ENCODE measurements at regions of chr22 and their contacts with region 1.

Region 1: DNA sequence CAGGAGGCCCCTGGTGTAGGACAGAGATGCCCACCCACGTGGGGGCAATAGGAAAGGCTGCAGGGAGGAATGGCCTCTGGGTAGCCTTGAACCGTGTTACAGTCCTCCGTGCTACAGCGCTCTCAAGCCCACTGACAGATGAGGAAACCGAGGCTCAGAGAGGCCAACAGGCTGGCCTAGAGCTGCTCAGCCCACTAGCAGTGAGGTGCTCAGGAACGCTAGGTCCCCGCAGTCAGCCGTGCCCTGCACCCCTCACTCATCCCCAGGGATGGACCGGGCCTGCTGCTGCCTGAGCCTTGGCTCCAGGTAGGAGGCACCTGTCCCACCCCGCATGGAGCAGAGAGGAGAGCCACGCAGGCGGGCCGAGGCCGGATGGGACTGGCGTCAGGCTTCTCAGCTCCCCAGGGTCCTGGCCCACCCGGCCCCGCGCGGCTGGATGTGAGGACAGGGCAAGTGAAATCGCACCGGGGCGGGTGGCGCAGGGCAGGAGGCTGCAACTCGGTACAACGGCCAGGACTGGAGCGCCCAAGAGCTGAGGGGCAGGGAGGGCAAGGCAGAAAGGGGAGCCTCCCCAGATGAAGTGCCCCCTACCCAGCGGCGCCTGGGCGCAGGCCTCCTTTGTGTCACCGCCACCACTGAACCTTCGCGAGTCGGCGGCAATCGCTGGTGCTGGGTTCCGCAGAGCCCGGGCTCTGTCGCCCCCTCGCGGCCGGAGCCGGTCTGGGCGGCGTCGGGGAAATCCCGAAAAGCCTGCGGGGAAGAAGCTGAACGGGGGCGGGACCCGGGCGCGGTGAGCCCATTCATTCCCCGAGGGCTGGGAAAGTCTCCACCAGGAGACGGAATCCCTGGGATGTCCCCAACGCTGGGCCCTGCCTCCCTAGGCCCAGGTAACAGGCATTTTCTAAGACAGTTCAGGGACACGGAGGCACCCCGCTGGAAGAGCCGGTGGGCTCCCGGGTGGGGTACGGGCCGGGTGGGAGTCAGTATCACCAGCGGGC is 8.4 kb upstream of the SLC2A11 start:
- DNase-seq: peak; percentile 74
- H3K4me3 ChIP-seq: no peak overlapping the region
- H3K27ac ChIP-seq: no peak overlapping the region
- H3K4me1 ChIP-seq: peaks cover 4% of the 10 kb centered on the region
- H3K27me3 ChIP-seq: no peaks in the 10 kb centered on the region
- CTCF ChIP-seq: peak; percentile 98 to 99
- POLR2A ChIP-seq: no peak

Region 2: DNA sequence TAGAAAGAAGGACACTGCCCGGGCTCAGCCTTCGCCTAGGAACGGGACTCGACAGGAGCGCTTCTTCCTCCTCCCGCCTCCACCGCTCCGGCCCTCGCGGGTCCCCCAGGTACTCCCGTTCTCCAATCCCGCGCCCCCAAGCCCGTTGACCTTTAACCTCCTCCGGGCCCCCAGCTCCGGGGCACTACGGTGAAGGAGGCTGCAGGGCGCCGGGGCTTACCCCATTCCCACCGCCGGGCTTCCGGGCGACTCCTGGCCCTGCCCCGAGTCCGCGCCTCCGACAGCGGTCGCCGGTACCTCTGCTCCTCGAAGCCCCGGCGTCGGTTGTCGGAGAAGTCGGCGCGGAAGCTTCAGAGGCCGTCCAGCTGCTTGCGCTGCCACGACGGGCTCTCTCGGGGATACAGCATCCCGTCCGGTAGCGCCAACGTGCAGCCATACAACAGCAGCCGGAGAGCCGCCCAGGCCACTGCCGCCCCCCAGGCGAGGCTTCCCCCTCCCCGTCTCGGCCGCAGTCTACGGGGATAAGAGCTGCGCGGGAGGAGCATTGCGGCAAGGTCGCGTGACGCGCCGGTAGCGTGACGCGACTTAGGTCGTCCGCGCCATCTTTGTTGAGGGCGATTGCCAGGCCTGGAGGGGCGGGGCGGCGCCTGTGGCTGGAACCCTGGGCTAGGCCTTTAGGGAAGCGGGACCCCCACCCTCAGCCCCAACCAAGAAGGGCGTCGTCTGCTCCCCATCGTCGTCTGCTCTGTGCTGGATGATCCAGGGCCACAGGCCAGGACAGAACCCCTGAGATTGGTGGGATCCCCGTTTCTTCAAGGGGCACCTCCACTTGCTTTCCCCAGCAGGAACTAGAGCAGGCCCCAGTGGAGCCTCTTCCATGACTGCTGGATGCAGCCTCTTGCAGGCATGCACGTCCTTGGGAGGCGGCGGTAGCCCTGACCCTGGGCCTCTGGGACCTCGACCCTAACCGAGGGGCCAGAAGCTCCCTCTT is 132.2 kb before region 1 on chr22:
- CTCF ChIA-PET with region 1: interaction called, 5 read pairs
- POLR2A ChIA-PET with region 1: no interaction called
- dilution Hi-C with region 1: no loop called
- intact Hi-C with region 1: loop called (anchors 5 kb)
- DNase-seq: peak; percentile 83
- H3K4me3 ChIP-seq: peak overlapping the region; percentile 68 to 88 (median 74)
- H3K27ac ChIP-seq: peak overlapping the region; percentile 55
- H3K4me1 ChIP-seq: no peaks in the 10 kb centered on the region
- H3K27me3 ChIP-seq: no peaks in the 10 kb centered on the region
- CTCF ChIP-seq: no peak
- POLR2A ChIP-seq: peak; percentile 90

Region 3: GRCh38 chr22:23774743-23775566 is 74.4 kb before region 1 on chr22:
- CTCF ChIA-PET with region 1: interaction called, 63 read pairs
- POLR2A ChIA-PET with region 1: no interaction called
- dilution Hi-C with region 1: no loop called
- intact Hi-C with region 1: loop called (anchors 1 kb)
- DNase-seq: no peak
- H3K4me3 ChIP-seq: no peak overlapping the region
- H3K27ac ChIP-seq: no peak overlapping the region
- H3K4me1 ChIP-seq: peaks cover 9% of the 10 kb centered on the region
- H3K27me3 ChIP-seq: no peaks in the 10 kb centered on the region
- CTCF ChIP-seq: no peak
- POLR2A ChIP-seq: no peak

Region 4: GRCh38 chr22:23812378-23812777 is 36.9 kb before region 1 on chr22:
- CTCF ChIA-PET with region 1: interaction called, 10 read pairs
- POLR2A ChIA-PET with region 1: no interaction called
- dilution Hi-C with region 1: no loop called
- intact Hi-C with region 1: no loop called
- DNase-seq: no peak
- H3K4me3 ChIP-seq: no peak overlapping the region
- H3K27ac ChIP-seq: no peak overlapping the region
- H3K4me1 ChIP-seq: no peaks in the 10 kb centered on the region
- H3K27me3 ChIP-seq: no peaks in the 10 kb centered on the region
- CTCF ChIP-seq: no peak
- POLR2A ChIP-seq: no peak

Region 5: DNA sequence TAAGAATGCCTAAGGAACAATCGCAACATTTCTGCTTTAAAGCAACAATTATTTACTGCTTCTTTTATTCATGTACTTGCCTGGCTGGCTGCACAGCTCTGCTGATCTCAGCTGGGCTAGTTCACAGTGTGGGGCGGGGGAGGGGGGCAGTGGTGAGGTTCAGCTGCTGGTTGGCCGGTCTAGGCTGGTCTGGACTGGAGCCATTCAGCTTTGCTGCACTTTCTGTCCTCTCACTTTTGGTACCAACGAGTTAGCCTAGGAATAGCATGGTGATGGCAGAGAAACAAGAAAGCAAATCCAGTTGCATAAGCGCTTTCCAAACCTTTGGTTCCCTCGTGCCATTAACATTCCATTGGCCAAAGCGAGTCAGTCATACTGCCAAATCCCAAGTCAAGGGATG is 28.9 kb after region 1 on chr22:
- CTCF ChIA-PET with region 1: interaction called, 11 read pairs
- POLR2A ChIA-PET with region 1: no interaction called
- dilution Hi-C with region 1: no loop called
- intact Hi-C with region 1: no loop called
- DNase-seq: no peak
- H3K4me3 ChIP-seq: no peak overlapping the region
- H3K27ac ChIP-seq: no peak overlapping the region
- H3K4me1 ChIP-seq: no peaks in the 10 kb centered on the region
- H3K27me3 ChIP-seq: no peaks in the 10 kb centered on the region
- CTCF ChIP-seq: no peak
- POLR2A ChIP-seq: no peak

Measured in endothelial cell of umbilical vein (primary cell).